ENCODE measurements at regions of chr1 and their contacts with region 1.

Region 1: DNA sequence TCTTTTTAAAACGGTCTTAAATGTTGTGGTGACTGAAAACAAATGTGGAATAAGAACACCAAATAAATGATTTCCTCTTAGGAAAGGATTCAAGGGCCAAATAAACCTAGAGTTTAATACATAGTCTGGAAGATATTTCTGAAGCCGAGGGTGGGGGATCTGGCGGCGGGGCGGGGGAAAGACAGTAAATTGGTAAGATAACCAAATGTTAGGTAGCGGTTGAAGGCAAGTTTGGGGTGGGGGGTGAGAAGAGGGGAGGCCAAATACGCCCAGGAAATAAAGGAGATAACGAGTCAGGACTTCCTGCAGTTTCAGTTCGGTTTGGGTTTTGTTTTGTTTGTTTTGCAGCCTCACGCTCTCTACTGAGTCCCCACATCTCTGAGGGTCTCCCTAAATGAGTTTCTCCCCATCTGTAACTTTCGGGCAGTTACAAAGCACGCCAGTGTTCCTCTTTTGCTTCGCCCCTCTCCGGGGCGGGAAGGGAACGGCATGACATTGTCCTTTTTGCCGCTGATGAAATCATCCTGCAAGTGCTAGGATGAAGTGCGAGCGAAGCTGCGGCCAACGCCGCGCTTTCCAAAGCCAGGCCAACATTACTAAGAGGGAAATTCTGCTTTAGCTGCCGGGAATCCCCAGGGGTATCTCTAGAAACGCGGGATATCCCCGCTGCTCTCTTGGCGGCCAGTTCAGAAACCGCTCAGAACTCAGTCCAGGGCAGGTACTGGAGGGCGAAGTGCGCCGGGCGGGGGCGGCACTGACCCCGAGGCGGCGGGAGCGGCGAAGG is 844 bp downstream of the NIBAN1 start:
- DNase-seq: peak in 3 of 4 experiments; percentile 28 to 79 (median 66)
- ATAC-seq: peak; percentile 83
- H3K4me3 ChIP-seq: peak overlapping the region; percentile 75
- H3K27ac ChIP-seq: peak overlapping the region; percentile 92
- H3K4me1 ChIP-seq: peaks cover 13 to 18% of the 10 kb centered on the region in 2 experiments; a peak in 4 of 5 replicates
- H3K27me3 ChIP-seq: no peaks in the 10 kb centered on the region
- CTCF ChIP-seq: no peak
- EP300 ChIP-seq: peak; percentile 90
- POLR2A ChIP-seq: peak; percentile 77
- RAD21 ChIP-seq: no peak; a peak in 1 of 4 replicates

Region 2: GRCh38 chr1:184810735-184811343 is 162.6 kb before region 1 on chr1:
- CTCF ChIA-PET with region 1: no interaction called
- POLR2A ChIA-PET with region 1: interaction called, 30 read pairs
- in situ Hi-C with region 1: no loop called
- intact Hi-C with region 1: no loop called
- DNase-seq: no peak
- ATAC-seq: no peak
- H3K4me3 ChIP-seq: no peak overlapping the region
- H3K27ac ChIP-seq: no peak overlapping the region
- H3K4me1 ChIP-seq: peaks cover 9% of the 10 kb centered on the region in 2 experiments; a peak in 4 of 5 replicates
- H3K27me3 ChIP-seq: no peaks in the 10 kb centered on the region
- CTCF ChIP-seq: no peak
- EP300 ChIP-seq: no peak
- POLR2A ChIP-seq: no peak
- RAD21 ChIP-seq: no peak

Region 3: GRCh38 chr1:184875218-184875617 is 98.2 kb before region 1 on chr1:
- CTCF ChIA-PET with region 1: no interaction called
- POLR2A ChIA-PET with region 1: no interaction called
- in situ Hi-C with region 1: no loop called
- intact Hi-C with region 1: no loop called
- DNase-seq: no peak
- ATAC-seq: no peak
- H3K4me3 ChIP-seq: no peak overlapping the region
- H3K27ac ChIP-seq: no peak overlapping the region
- H3K4me1 ChIP-seq: peaks cover 0 to 4% of the 10 kb centered on the region in 2 experiments; a peak in 2 of 5 replicates
- H3K27me3 ChIP-seq: no peaks in the 10 kb centered on the region
- CTCF ChIP-seq: no peak
- EP300 ChIP-seq: no peak
- POLR2A ChIP-seq: no peak
- RAD21 ChIP-seq: no peak

Region 4: DNA sequence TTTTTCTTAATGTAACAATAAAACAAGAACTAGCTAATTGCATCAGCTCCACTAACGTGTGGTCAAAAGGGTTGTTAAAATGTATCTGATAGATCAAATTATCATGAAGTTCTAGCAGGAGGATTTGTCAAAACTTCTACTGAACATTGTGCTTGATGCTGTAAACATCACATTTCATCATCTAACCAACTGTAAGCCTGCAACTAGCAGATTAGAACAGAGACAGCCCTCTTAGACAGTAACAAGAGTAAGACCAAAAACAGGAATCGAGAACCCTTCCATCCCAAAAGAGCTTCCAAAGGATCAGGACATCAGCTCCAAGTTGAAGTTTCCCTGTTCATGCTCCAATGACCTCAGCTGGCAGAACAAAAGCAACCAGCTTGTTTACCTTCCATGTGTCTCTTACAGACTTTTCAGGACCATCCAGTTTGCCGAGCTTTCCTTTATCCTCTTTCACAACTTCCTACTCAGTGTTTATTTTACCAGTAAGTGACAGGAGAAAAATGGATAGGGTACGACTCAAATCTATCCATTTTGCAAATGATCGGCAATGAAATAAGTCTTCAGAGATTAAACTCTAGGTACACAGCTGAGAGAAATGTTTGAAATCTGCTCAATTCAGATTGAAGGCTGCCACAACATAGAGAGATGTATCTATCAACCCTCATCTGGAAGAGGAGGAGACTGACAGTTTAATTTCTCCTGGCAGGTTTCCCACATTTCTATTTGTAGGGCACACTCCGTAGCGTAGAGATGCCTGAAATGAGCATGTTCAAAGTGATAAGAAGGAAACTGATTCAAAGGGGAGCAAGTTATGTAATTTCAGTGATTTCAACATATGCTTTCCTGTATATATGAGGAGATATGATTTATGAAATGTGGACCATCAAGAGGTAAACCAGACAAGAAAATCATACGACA is 43.5 kb before region 1 on chr1:
- CTCF ChIA-PET with region 1: no interaction called
- POLR2A ChIA-PET with region 1: no interaction called
- in situ Hi-C with region 1: no loop called
- intact Hi-C with region 1: loop called (anchors 2 kb)
- DNase-seq: peak in 1 of 4 experiments; percentile 29
- ATAC-seq: peak; percentile 85
- H3K4me3 ChIP-seq: no peak overlapping the region
- H3K27ac ChIP-seq: peak overlapping the region; percentile 10; the same call in 2 of the 3 replicates
- H3K4me1 ChIP-seq: peaks cover 0 to 10% of the 10 kb centered on the region in 2 experiments; a peak in 2 of 5 replicates
- H3K27me3 ChIP-seq: no peaks in the 10 kb centered on the region
- CTCF ChIP-seq: no peak
- EP300 ChIP-seq: peak; percentile 91
- POLR2A ChIP-seq: no peak
- RAD21 ChIP-seq: no peak; a peak in 1 of 4 replicates

Region 5: DNA sequence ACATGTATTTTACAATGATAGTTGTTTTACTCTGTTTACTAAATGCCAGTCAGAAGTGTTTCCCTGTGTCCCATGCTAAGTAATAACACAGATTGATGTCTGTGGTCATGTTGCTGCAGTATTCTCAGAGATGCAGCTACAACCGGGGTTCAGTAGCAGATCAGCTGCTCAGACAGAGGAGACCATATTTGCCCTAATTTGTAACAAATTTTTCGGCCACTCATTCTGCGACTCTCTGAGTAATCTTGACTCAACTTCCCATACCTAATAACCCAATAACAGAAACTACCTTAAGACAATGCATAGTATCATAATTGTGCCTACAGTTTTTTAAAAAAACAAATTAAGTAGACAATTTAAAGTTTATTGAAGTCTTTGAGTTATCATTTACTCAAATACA is 31.7 kb before region 1 on chr1:
- CTCF ChIA-PET with region 1: no interaction called
- POLR2A ChIA-PET with region 1: interaction called, 10 read pairs
- in situ Hi-C with region 1: no loop called
- intact Hi-C with region 1: no loop called
- DNase-seq: no peak
- ATAC-seq: peak; percentile 11; the same call in 1 of the 3 replicates
- H3K4me3 ChIP-seq: no peak overlapping the region
- H3K27ac ChIP-seq: no peak overlapping the region
- H3K4me1 ChIP-seq: peaks cover 0 to 3% of the 10 kb centered on the region in 2 experiments; a peak in 2 of 5 replicates
- H3K27me3 ChIP-seq: no peaks in the 10 kb centered on the region
- CTCF ChIP-seq: no peak
- EP300 ChIP-seq: no peak
- POLR2A ChIP-seq: no peak
- RAD21 ChIP-seq: no peak

Region 6: DNA sequence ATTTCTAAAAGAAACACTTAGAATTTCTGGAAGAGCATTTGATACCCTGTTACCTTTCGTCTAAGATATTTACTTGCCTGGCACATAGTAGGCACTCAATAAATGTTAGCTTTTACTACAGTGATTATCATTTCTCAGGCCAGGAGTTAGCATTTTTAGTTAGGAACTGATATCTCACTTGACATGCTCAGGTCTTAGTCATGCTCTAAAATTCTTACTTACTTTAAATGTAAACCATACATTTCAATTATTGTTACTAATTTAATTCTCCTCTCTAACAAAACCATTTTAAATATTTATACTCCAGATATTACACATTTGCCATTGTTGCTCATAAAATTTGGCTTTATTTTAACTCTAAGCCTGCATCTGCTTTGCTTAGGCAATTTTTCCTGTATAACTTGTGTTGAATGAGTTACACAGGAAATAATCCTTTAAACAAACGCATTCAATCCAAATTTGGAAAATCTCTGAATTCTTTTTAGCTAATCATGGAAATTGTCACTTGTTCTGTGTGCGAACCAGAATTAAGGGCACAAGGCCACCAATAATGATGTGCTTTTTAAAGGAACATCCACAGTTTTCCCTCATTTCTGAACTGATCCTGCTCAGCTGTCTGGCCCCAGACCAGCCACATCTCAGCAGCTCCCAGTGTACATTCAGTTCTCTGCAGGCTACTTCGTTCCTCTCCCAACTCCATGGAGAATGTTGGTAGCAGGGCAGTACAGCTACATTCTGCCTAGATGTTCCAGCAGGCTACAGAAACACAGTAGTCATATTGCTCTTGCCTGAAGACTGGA is 14.7 kb before region 1 on chr1:
- CTCF ChIA-PET with region 1: no interaction called
- POLR2A ChIA-PET with region 1: interaction called, 63 read pairs
- in situ Hi-C with region 1: no loop called
- intact Hi-C with region 1: no loop called
- DNase-seq: no peak
- ATAC-seq: peak; percentile 64
- H3K4me3 ChIP-seq: no peak overlapping the region
- H3K27ac ChIP-seq: no peak overlapping the region
- H3K4me1 ChIP-seq: peaks cover 0 to 10% of the 10 kb centered on the region in 2 experiments; a peak in 3 of 5 replicates
- H3K27me3 ChIP-seq: no peaks in the 10 kb centered on the region
- CTCF ChIP-seq: no peak
- EP300 ChIP-seq: no peak
- POLR2A ChIP-seq: no peak
- RAD21 ChIP-seq: no peak

Region 7: DNA sequence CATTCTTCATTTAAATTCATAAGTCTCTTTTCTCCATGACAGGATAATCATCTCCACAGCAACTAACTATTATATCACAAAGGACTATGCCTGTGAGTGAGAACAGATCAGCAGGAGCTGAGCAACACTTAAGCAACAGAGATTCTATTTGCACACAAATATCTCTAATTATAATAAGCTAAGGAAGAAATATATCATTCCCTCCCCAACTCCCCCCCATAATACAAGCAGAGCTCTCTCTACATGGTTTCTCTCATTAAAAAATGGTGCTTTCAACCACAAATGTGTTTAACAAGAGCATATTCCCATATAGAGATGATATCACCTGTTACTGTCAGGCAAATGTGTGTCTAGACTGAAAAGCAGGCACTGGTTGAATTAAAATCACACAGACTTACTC is 35.4 kb after region 1 on chr1:
- CTCF ChIA-PET with region 1: no interaction called
- POLR2A ChIA-PET with region 1: no interaction called
- in situ Hi-C with region 1: no loop called
- intact Hi-C with region 1: no loop called
- DNase-seq: no peak
- ATAC-seq: no peak
- H3K4me3 ChIP-seq: no peak overlapping the region
- H3K27ac ChIP-seq: no peak overlapping the region
- H3K4me1 ChIP-seq: no peaks in the 10 kb centered on the region
- H3K27me3 ChIP-seq: no peaks in the 10 kb centered on the region
- CTCF ChIP-seq: no peak
- EP300 ChIP-seq: no peak
- POLR2A ChIP-seq: no peak
- RAD21 ChIP-seq: no peak

Region 8: DNA sequence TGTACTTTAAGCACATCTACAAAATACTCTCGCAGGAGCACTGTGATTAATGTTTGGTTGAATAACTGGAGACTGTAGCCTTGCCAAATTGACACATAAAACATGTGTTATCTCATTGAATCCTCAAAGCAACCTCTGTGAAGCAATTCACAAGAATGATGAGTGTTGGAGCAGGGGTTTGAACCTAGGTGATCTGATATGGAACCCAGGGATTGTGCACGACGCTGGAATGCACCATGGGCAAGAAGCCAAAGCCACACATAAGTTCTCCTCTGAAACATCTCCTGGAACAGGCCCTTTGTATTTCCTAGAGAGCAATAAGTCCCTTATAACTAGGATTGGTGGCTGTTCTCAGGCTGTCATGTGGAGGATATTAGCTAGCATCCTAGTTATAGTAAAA is 468.1 kb after region 1 on chr1:
- CTCF ChIA-PET with region 1: no interaction called
- POLR2A ChIA-PET with region 1: no interaction called
- in situ Hi-C with region 1: no loop called
- intact Hi-C with region 1: no loop called
- DNase-seq: peak in 1 of 4 experiments; percentile 19
- ATAC-seq: no peak
- H3K4me3 ChIP-seq: no peak overlapping the region
- H3K27ac ChIP-seq: no peak overlapping the region
- H3K4me1 ChIP-seq: no peaks in the 10 kb centered on the region; a peak in 1 of 5 replicates
- H3K27me3 ChIP-seq: 0 out of 5 replicates have a peak, but pooled peaks cover 0 to 3% of the 10 kb centered on the region in 2 experiments
- CTCF ChIP-seq: no peak
- EP300 ChIP-seq: no peak
- POLR2A ChIP-seq: no peak
- RAD21 ChIP-seq: no peak

Region 9: DNA sequence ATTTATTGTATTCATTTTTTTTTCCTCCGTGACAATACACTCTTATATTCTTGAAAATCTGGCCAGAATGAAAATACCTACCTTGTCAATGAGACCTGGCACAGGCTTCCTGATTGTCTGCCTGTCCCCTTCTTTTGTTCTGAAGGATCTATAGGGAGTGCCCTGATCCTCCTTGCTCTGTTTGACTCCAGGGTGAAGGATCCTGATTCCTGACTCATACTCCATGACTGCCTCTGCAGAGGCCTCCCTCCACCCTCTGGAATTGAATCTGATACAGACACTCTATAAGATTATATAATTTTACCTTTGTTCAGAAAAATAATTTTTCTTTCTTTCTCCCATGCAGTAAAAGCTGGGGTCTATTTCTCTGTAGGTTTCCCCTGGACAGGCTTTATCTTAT is 876.9 kb after region 1 on chr1:
- CTCF ChIA-PET with region 1: no interaction called
- POLR2A ChIA-PET with region 1: no interaction called
- in situ Hi-C with region 1: no loop called
- intact Hi-C with region 1: no loop called
- DNase-seq: no peak
- ATAC-seq: no peak
- H3K4me3 ChIP-seq: no peak overlapping the region
- H3K27ac ChIP-seq: no peak overlapping the region
- H3K4me1 ChIP-seq: no peaks in the 10 kb centered on the region
- H3K27me3 ChIP-seq: no peaks in the 10 kb centered on the region
- CTCF ChIP-seq: no peak
- EP300 ChIP-seq: no peak
- POLR2A ChIP-seq: no peak
- RAD21 ChIP-seq: no peak

Measured in K562 (cell line).